Activated B cell treated with CpG ODN at 0.5 μM for 24 hours (primary cell): ENCODE measurements at regions of chr6 and their contacts with region 1.

Region 1: DNA sequence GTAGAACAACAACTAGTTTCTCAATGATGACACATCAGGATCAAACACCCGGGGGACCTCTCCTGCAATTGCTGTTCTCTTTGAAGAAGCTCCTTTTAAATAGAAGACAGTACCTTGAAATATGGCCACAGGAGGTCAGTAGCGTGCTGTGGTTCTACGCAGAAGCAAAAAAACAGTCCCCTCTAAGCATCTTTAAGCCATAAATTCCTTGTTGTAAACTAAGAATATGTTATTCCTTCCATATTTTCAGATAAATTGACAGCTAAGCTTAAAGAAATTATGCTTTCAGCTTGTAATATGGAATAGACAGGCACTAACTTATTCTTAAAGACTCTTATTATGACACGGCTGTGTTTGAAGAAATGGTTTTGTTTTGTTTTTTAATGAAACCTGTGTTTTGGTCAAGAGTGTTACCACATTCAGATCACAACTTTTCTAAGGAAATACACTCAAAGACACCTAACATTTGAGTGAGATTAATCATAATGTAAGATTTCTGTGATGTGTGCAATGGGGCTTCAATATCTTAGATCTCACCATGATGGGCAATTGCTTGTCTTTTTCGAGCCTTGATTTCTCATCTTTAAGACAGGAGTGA is 49.7 kb upstream of the IL20RA start:
- DNase-seq: no peak
- ATAC-seq: peak; percentile 34
- H3K4me3 Mint-ChIP-seq: peak overlapping the region; percentile 38
- H3K27ac Mint-ChIP-seq: peak overlapping the region; percentile 93
- H3K4me1 Mint-ChIP-seq: peaks cover 63% of the 10 kb centered on the region
- H3K27me3 Mint-ChIP-seq: no peaks in the 10 kb centered on the region
- CTCF ChIP-seq: peak; percentile 71

Region 2: GRCh38 chr6:136643850-136644596 is 450.5 kb before region 1 on chr6:
- CTCF ChIA-PET with region 1: interaction called, 5 read pairs
- POLR2A ChIA-PET with region 1: no interaction called
- intact Hi-C with region 1: loop called (anchors 10 kb)
- DNase-seq: peak; percentile 63
- ATAC-seq: peak; percentile 59
- H3K4me3 Mint-ChIP-seq: no peak overlapping the region
- H3K27ac Mint-ChIP-seq: no peak overlapping the region
- H3K4me1 Mint-ChIP-seq: peaks cover 4% of the 10 kb centered on the region
- H3K27me3 Mint-ChIP-seq: no peaks in the 10 kb centered on the region
- CTCF ChIP-seq: peak; percentile 69

Region 3: DNA sequence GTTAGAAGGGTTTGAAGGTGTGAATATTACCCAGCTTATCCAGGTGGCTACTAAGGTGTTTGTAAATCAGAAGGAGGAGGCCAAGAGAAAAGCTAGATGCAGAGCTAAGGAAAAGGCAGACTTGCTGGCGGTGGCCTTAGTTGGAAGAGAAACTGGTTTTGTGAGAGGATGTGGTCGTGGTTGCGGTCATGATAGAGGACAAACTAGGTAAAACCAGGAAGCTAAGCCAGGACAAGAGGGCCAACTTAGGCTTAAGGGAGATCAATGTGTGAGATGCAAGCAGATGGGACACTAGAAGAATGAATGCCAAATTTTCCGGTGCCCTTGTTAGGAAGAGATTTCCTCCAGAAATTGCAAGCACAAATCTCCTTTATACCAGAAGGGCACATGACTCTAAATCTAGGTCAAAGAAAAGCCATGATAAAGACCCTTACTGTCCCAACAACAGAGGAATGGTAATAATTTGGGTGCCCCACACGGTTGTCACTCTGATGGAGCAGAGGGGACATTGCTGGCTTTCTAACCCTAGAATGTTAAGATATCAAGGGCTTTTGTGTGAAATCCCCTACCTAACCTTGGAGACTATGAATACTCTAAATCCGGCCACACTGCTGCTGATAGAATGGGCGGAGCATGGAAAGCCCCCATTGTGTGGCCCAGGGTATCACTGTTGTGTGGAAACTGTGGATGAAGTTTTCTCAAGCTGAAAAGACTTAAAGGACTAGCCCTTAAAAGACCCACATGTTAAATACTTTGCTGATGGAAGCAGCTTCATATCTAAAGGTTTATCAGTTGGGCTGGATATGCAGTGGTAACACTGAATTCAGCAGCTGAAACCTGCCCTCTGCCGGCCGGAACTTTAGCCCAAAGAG is 71.1 kb after region 1 on chr6:
- CTCF ChIA-PET with region 1: interaction called, 82 read pairs
- POLR2A ChIA-PET with region 1: interaction called, 44 read pairs
- intact Hi-C with region 1: loop called (anchors 1 kb)
- DNase-seq: peak; percentile 28
- ATAC-seq: peak; percentile 81
- H3K4me3 Mint-ChIP-seq: peak overlapping the region; percentile 45
- H3K27ac Mint-ChIP-seq: peak overlapping the region; percentile 92
- H3K4me1 Mint-ChIP-seq: peaks cover 75% of the 10 kb centered on the region
- H3K27me3 Mint-ChIP-seq: no peaks in the 10 kb centered on the region
- CTCF ChIP-seq: no peak

Region 4: DNA sequence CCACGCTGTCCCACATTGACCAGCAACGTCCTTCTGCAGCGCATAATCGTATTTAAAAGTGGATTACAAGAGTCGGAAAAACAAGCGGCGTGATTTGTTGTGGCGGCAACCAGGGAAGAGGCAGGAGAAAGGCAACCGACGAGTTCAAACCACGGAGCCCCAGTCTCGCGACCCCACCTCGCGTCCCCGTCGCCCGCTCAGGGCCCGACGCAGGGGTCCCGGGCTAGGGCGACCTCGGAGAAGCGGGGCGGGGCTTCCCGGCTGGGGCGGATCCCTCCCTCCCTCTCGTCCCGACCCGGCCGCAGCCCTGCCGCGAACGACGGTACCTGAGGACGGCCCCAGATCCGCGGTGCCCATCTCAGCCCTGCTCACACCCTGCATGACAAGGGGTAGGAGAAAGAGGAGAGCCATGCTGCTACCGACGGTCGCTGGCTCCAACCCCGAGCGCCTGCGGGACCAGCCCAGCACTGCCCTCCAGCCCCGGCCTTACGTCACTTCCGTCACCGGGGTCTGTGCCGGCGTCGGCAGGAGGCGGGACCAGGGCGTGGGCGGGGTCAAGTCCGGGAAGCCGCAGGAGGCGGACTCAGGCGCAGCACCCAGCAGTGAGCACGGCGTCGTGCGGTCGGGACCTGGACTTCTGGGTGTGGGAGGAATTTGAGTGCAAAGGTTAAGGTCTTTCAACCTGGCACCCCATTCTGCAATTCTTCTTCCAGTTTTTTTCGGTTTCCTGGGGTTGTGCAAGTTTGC is 124.6 kb after region 1 on chr6 and contains the start of gene IFNGR1:
- CTCF ChIA-PET with region 1: interaction called, 25 read pairs
- POLR2A ChIA-PET with region 1: interaction called, 18 read pairs
- intact Hi-C with region 1: loop called (anchors 1 kb)
- DNase-seq: peak; percentile 97
- ATAC-seq: peak; percentile 85
- H3K4me3 Mint-ChIP-seq: peak within 1 kb of the TSS; percentile 99
- H3K27ac Mint-ChIP-seq: peak within 1 kb of the TSS; percentile 98
- H3K4me1 Mint-ChIP-seq: peaks cover 83% of the 10 kb centered on the region
- H3K27me3 Mint-ChIP-seq: no peaks in the 10 kb centered on the region
- CTCF ChIP-seq: no peak
- total RNA-seq, gene IFNGR1: 60.5 and 65.6 TPM in 2 replicates

Region 5: DNA sequence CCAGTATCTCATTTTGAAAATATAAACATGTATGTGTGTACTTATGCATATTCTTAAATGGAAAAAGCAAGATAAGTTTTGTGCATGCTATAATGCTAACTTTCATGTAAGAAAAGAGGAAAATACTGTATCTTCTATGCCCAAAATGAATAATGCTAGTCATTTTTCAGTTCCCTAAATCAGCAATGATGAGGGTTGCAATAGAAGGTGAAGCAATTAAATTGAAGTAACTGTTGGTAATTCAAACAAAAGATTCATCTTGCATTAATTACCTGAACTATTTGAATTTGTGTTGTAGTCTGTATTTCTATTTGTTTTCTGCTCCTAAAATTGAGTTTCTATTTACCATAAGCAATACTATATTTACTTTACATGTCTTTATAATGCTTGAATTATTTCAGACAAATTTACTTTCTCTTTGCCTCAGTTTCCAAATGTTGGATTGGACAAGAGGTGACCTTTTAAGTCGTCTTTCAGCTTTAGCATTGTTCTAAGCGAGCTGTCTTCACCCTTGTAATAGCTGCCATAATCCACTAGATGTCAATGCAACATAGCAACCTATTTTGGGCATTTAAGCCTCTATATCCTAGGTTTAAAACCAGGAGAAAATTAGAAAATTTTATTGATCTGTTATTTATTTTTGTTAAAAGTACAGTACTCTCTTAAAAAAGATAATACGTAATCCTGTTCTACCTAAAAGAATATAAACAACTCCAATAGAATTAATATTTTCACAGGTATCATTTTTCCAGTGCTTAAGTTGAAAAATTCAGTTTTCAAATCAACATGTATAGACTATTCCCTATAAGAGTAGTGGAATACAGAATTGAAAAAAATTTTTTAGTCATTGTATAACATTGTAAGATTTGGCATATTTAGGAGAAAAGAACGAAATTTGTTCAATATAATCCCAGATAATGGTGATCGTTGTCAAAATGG is 177.0 kb after region 1 on chr6:
- CTCF ChIA-PET with region 1: interaction called, 30 read pairs
- POLR2A ChIA-PET with region 1: no interaction called
- intact Hi-C with region 1: loop called (anchors 1 kb)
- DNase-seq: no peak
- ATAC-seq: peak; percentile 75
- H3K4me3 Mint-ChIP-seq: no peak overlapping the region
- H3K27ac Mint-ChIP-seq: no peak overlapping the region
- H3K4me1 Mint-ChIP-seq: peaks cover 20% of the 10 kb centered on the region
- H3K27me3 Mint-ChIP-seq: no peaks in the 10 kb centered on the region
- CTCF ChIP-seq: peak; percentile 61

Region 6: DNA sequence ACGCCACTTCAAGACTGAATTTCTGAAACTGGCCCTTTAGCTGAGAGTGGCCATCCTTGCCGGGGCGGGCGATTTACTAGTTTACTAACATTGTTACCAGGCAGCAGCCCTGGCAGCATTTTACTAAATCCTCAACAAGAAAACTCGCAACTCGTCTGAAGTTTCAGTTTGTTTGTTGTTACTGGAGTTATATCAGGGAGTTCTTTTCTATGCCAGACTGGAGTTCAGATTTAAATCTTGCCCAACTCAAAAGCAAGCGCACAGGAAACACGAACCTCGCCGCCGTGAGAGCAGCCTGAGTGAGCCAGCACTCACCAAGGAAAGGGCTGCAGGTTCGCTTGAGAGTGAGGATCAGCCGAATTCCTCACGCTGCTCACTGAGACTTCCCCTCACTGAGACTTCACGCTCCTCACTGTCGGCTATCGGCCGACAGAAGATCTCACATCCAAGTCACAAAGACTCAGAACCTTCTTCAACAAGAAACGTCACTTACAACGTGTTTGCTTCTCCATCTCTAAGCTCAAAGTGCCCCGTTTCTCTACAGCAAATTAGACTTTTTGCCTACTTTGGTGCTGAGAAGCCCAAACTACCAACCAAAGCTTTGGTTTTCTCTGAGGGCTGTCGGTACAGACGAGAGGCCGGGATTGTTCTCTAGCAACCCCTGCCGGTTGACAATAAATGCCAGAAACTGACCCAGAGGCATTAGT is 320.8 kb after region 1 on chr6:
- CTCF ChIA-PET with region 1: interaction called, 26 read pairs
- POLR2A ChIA-PET with region 1: no interaction called
- intact Hi-C with region 1: loop called (anchors 1 kb)
- DNase-seq: peak; percentile 27
- ATAC-seq: peak; percentile 93
- H3K4me3 Mint-ChIP-seq: peak overlapping the region; percentile 84
- H3K27ac Mint-ChIP-seq: peak overlapping the region; percentile 61
- H3K4me1 Mint-ChIP-seq: peaks cover 11% of the 10 kb centered on the region
- H3K27me3 Mint-ChIP-seq: peaks cover 2% of the 10 kb centered on the region
- CTCF ChIP-seq: no peak

Region 7: DNA sequence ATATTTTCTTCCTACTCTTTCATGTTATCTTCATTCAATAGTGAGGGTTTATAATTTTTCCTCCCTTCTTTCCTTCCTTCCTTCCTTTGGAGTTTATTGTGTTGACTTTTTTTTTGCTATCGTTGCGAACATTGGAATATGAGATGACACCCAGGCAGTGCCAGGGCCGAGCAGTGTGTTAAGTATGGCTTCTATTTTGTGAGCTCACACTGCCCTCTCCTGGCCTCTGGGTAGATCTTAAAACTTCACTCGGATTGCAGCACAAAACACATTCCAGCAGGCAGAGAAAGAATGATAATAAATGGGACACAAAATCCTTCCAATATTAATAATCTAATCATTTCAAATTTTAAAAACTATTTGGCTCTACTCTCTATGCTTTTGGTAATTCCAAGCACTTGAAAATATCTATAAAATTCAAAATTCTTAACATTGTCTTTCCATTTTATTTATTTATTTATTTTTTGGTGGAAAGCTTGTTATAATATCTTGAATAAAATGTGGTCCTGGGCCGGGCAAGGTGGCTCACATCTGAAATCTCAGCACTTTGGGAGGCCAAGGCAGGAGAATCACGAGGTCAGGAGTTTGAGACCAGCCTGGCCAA is 547.1 kb after region 1 on chr6:
- CTCF ChIA-PET with region 1: interaction called, 7 read pairs
- POLR2A ChIA-PET with region 1: no interaction called
- intact Hi-C with region 1: loop called (anchors 1 kb)
- DNase-seq: peak; percentile 20
- ATAC-seq: peak; percentile 83
- H3K4me3 Mint-ChIP-seq: no peak overlapping the region
- H3K27ac Mint-ChIP-seq: no peak overlapping the region
- H3K4me1 Mint-ChIP-seq: peaks cover 12% of the 10 kb centered on the region
- H3K27me3 Mint-ChIP-seq: peaks cover 1% of the 10 kb centered on the region
- CTCF ChIP-seq: peak; percentile 58